Gastrocnemius medialis (tissue), 4 donors: ENCODE measurements at regions of chr1 and their contacts with region 1.

Region 1: GRCh38 chr1:165857046-165857801 is 29.8 kb downstream of the UCK2 start:
- DNase-seq: peak; percentile 69 to 77
- ATAC-seq: peak; percentile 85 to 90
- H3K4me3 ChIP-seq: no peak overlapping the region
- H3K27ac ChIP-seq: peak overlapping the region; percentile 76 to 80 (median 78)
- H3K4me1 ChIP-seq: peaks cover 71 to 73% of the 10 kb centered on the region in 2 donors
- H3K27me3 ChIP-seq: no peaks in the 10 kb centered on the region
- CTCF ChIP-seq: no peak
- POLR2A ChIP-seq: no peak

Region 2: DNA sequence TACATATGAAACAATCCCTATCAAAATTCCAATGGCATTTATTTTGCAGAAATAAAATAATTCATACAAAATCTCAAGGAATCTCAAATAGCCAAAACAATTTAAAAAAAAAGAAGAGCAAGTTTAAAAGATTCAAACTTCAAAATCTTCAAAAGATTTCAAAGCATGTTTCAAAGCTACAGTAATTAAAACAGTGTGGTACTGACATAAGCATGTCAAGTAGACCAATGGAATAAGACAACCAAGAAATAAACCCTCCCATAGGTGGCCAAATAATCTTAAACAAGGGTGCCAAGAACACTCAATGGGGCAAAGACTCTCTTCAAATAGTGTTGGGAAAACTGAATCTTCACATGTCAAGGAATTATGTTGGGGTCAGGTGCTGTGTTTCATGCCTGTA is 57.8 kb before region 1 on chr1:
- in situ Hi-C with region 1: no loop called
- intact Hi-C with region 1: no loop called
- DNase-seq: no peak
- ATAC-seq: no peak
- H3K4me3 ChIP-seq: no peak overlapping the region
- H3K27ac ChIP-seq: no peak overlapping the region
- H3K4me1 ChIP-seq: no peaks in the 10 kb centered on the region
- H3K27me3 ChIP-seq: no peaks in the 10 kb centered on the region
- CTCF ChIP-seq: no peak
- POLR2A ChIP-seq: no peak

Region 3: GRCh38 chr1:165815725-165816124 is 41.5 kb before region 1 on chr1:
- in situ Hi-C with region 1: no loop called
- intact Hi-C with region 1: no loop called
- DNase-seq: no peak
- ATAC-seq: no peak
- H3K4me3 ChIP-seq: no peak overlapping the region
- H3K27ac ChIP-seq: no peak overlapping the region
- H3K4me1 ChIP-seq: no peaks in the 10 kb centered on the region
- H3K27me3 ChIP-seq: no peaks in the 10 kb centered on the region
- CTCF ChIP-seq: no peak
- POLR2A ChIP-seq: no peak

Region 4: DNA sequence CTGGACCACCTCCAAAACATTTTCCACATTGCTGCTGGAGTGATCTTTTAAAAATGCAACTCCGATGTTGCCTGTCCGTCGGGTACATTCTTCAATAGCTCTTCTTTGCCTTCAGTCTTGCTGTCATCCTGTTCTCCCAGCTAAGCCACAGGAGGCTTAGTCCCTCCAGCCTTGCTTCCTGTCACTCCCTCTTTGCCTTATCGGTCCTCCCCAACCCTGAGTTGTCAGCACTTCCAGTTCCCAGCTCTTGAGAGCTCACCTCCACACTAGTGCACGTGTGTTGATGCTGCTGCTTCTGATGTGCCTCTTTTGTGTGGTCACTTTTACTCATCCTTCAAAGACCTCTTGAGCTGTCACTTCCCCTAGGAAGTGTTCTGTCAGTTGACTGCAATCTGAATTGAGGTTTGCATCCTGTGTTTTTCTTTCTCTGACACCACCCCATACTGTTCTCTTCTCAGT is 14.5 kb before region 1 on chr1:
- in situ Hi-C with region 1: no loop called
- intact Hi-C with region 1: loop called (anchors 2 kb)
- DNase-seq: no peak
- ATAC-seq: peak in 1 of 2 donors; percentile 55
- H3K4me3 ChIP-seq: no peak overlapping the region
- H3K27ac ChIP-seq: peak overlapping the region; percentile 49 to 68 (median 61)
- H3K4me1 ChIP-seq: peaks cover 27% of the 10 kb centered on the region in 2 donors
- H3K27me3 ChIP-seq: no peaks in the 10 kb centered on the region
- CTCF ChIP-seq: no peak
- POLR2A ChIP-seq: no peak

Region 5: DNA sequence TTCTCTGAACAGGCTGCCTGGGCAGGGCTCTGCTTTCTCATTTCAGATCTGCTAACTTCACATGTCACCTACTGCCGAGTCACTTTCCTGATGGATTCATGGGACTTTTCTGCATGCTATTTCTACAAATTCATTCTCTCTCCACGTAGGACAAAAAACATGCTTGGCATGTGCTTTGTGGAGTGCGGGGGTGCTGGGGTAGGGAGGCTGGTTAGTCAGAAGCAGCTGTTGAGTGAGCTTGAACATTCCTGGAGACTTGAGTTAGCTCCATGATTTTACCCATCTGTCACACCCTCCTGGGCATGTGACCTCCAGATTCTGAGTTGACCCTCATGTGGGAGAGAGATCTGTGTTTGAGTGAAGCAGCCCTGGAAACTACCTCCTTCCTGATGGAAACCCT is 41.6 kb after region 1 on chr1:
- in situ Hi-C with region 1: no loop called
- intact Hi-C with region 1: loop called (anchors 5 kb)
- DNase-seq: peak in 1 of 2 donors; percentile 35
- ATAC-seq: peak; percentile 36 to 41
- H3K4me3 ChIP-seq: no peak overlapping the region
- H3K27ac ChIP-seq: peak overlapping the region; percentile 13 to 87 (median 33)
- H3K4me1 ChIP-seq: peaks cover 18 to 28% of the 10 kb centered on the region in 2 donors
- H3K27me3 ChIP-seq: no peaks in the 10 kb centered on the region
- CTCF ChIP-seq: no peak
- POLR2A ChIP-seq: peak in 1 of 2 donors; percentile 26

Region 6: GRCh38 chr1:165949335-165950130 is 92.3 kb after region 1 on chr1:
- in situ Hi-C with region 1: no loop called
- intact Hi-C with region 1: no loop called
- DNase-seq: no peak
- ATAC-seq: no peak
- H3K4me3 ChIP-seq: no peak overlapping the region
- H3K27ac ChIP-seq: no peak overlapping the region
- H3K4me1 ChIP-seq: no peaks in the 10 kb centered on the region
- H3K27me3 ChIP-seq: no peaks in the 10 kb centered on the region
- CTCF ChIP-seq: no peak
- POLR2A ChIP-seq: no peak

Region 7: GRCh38 chr1:165960136-165960535 is 102.9 kb after region 1 on chr1:
- in situ Hi-C with region 1: no loop called
- intact Hi-C with region 1: no loop called
- DNase-seq: no peak
- ATAC-seq: no peak
- H3K4me3 ChIP-seq: no peak overlapping the region
- H3K27ac ChIP-seq: no peak overlapping the region
- H3K4me1 ChIP-seq: no peaks in the 10 kb centered on the region
- H3K27me3 ChIP-seq: no peaks in the 10 kb centered on the region
- CTCF ChIP-seq: no peak
- POLR2A ChIP-seq: no peak